Activated CD4-positive, alpha-beta T cell treated with anti-CD3 and anti-CD28 coated beads for 36 hours (primary cell): ENCODE measurements at regions of chr20 and their contacts with region 1.

Region 1: GRCh38 chr20:3710703-3711483 is 1.5 kb downstream of the SIGLEC1 start:
- DNase-seq: peak; percentile 88
- ATAC-seq: peak; percentile 75
- H3K4me3 Mint-ChIP-seq: no peak overlapping the region
- H3K27ac Mint-ChIP-seq: no peak overlapping the region
- H3K4me1 Mint-ChIP-seq: no peaks in the 10 kb centered on the region
- H3K27me3 Mint-ChIP-seq: no peaks in the 10 kb centered on the region

Region 2: GRCh38 chr20:3563548-3564177 is 147.2 kb before region 1 on chr20:
- CTCF ChIA-PET with region 1: interaction called, 28 read pairs
- POLR2A ChIA-PET with region 1: no interaction called
- intact Hi-C with region 1: loop called (anchors 1 kb)
- DNase-seq: peak; percentile 10
- ATAC-seq: no peak
- H3K4me3 Mint-ChIP-seq: no peak overlapping the region
- H3K27ac Mint-ChIP-seq: no peak overlapping the region
- H3K4me1 Mint-ChIP-seq: no peaks in the 10 kb centered on the region
- H3K27me3 Mint-ChIP-seq: no peaks in the 10 kb centered on the region